Ovary (tissue), 10 donors: ENCODE measurements at regions of chr1 and their contacts with region 1.

Region 1: DNA sequence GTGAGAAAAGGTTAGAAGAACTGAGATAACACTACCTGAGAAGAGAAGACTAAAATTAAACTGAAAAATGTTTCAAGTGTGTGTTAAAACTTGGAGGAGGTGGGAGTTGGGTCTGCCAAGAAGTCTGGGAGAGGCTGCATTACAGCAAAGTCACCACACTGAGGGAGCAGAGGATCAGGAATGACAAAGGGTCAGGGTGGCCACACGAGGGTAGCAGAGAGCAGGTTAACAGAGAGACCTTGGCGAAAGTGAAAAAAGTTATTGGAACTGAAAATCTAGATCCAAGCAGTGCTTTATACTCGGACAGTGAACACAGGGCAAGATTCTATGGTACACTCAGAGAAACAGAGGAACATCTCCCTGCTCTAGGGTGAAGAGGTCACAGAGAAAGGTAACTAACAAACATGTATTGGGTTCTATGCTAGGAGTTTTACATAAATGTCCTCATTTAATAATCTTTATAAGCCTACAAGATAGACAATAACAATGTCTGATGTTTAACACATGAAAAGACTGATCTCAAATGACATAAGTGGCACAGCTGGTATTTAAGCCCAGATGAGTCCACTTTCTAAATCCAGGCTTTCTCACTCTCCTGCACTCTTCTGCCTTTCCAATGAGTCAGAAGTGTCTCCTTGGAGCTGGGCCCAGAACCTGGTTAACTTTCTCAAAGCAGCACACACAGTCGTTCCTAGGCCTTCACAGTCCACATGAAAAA is 10.3 kb upstream of the CADM3 start:
- DNase-seq: peak; percentile 37 to 66 (median 53)
- H3K4me3 ChIP-seq: no peak overlapping the region
- H3K27ac ChIP-seq: no peak overlapping the region
- H3K4me1 ChIP-seq: no peaks in the 10 kb centered on the region
- H3K27me3 ChIP-seq: no peaks in the 10 kb centered on the region
- CTCF ChIP-seq: peak in 2 of 3 donors; percentile 48 to 59
- EP300 ChIP-seq: no peak
- POLR2A ChIP-seq: no peak

Region 2: DNA sequence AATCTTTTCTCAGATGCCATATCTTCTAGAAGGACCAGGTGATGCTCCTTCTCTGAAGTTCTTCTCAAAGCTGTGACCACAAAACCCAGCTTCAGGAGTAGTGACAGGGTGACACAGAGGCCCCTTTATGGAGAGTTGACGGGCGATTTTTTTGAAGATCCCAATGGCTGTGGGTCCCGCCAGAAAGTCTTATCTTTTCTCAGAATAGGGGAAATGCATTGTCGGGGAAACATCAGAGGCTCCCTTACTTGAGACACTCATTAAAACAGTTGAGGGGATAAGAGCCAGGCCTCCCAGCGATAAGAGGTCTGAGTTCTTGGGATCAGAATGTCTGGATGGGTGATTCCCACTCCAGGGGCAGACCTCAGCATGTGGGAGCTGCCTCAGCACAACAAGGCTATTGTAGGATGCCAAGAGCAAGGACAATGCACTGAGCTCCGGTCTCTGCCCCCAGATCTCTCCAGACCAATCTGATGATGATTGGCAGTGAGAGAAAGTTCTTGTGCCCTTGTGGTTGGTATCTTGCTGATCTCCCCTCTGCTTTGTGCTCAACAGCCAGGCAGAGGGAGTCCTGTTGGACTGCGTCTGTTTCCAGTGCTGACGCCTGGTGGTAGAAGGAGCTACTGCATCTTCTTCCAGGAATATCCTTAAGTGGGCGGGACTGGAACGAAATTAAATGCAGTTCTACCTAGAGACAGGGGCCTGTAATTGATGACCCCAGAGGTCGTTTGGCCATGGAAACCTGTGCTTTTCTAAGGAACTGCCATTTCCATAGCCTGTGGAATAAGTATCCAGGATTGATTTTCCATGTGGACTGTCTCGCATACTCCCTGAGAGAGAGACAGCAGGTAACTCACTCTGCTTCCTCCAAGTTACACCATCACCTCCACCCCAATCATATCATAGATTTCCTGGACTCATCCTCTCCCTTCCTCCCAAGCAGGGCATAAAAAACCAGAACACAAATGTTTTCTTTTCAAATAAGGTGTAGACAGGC is 36.7 kb after region 1 on chr1:
- intact Hi-C with region 1: loop called in 1 of 4 experiments (anchors 5 kb)
- DNase-seq: peak in 3 of 5 donors; percentile 28 to 42 (median 37)
- H3K4me3 ChIP-seq: no peak overlapping the region
- H3K27ac ChIP-seq: no peak overlapping the region
- H3K4me1 ChIP-seq: no peaks in the 10 kb centered on the region
- H3K27me3 ChIP-seq: no peaks in the 10 kb centered on the region
- CTCF ChIP-seq: peak in 2 of 3 donors; percentile 15 to 21
- EP300 ChIP-seq: no peak
- POLR2A ChIP-seq: no peak

Region 3: GRCh38 chr1:159214149-159214760 is 53.1 kb after region 1 on chr1:
- intact Hi-C with region 1: loop called in 1 of 4 experiments (anchors 5 kb)
- DNase-seq: peak in 1 of 5 donors; percentile 23
- H3K4me3 ChIP-seq: no peak overlapping the region
- H3K27ac ChIP-seq: no peak overlapping the region
- H3K4me1 ChIP-seq: no peaks in the 10 kb centered on the region
- H3K27me3 ChIP-seq: no peaks in the 10 kb centered on the region
- CTCF ChIP-seq: peak in 2 of 3 donors; percentile 21 to 40
- EP300 ChIP-seq: no peak
- POLR2A ChIP-seq: no peak